Heart right ventricle (tissue), 16 donors: ENCODE measurements at regions of chr18 and their contacts with region 1.

Region 1: DNA sequence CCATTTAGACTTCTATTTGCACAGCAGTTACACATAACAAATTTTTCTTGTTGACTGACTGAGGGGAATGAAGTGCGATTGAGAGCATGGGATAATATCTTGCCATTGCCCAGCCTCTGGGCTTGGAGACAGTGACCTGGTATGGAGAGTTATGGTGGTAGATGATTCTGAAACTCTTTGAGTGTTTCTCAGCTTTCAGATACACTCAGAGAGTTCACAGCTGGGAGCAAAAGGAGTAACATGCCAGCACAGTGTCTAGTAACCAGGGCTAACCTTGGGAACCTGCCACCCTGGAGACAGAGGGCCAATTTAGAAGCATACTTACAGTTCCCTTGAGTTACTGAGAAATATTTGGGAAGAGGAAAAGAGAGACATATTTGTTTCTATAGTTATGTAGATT is 1099.3 kb upstream of the CELF4 start:
- DNase-seq: no peak
- ATAC-seq: no peak
- H3K4me3 ChIP-seq: no peak overlapping the region
- H3K27ac ChIP-seq: no peak overlapping the region
- H3K4me1 ChIP-seq: peaks cover 0 to 14% (median 0%) of the 10 kb centered on the region in 9 donors
- H3K27me3 ChIP-seq: no peaks in the 10 kb centered on the region
- CTCF ChIP-seq: no peak

Region 2: DNA sequence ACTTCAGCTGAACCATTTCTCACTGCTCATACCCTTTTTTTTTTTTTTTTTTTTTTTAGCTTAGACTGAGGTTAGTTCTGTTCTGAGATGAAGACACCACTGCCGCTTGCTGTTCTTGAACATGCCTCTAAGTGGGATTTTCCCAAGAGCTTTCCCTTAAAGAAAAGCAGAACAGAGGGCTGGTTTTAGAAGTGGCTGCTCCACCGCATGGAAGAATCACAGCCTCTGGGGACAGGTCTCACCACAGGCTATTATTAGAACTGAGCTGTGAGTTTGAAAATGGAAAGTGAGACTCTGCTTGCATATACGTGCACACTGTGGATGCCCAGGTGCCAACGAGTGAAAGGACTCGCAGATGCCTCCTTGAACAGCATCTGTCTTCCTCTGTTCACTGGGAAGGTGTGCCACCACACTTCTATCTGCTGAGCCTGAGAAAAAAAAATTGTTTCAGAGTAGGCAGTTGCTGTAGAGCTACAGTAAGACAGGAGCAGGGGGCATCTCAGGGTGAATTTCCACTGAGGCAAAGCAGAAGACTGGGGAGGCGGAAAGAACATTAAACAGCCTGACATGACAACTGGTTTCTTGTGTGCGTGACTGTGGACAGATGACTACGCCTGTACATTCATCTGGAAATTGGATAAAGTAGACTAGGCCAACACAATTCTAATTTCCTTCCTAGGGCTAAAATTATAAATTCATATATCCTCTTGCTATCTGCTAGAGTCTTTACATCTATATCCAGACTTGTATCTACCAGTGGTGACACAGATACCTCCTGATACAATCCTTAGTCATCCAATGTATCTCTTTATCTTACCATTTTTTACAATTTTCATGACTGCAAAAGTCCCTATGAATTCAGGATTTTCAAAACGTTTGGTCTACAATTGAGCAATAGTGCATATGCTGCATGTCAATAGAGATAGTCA is 53.6 kb before region 1 on chr18:
- intact Hi-C with region 1: loop called in 2 of 10 experiments (anchors 5 to 10 kb)
- DNase-seq: peak in 1 of 2 donors; percentile 6
- ATAC-seq: peak in 7 of 8 donors; percentile 33 to 93 (median 81)
- H3K4me3 ChIP-seq: no peak overlapping the region
- H3K27ac ChIP-seq: peak overlapping the region in 3 of 10 donors; percentile 7 to 41 (median 22)
- H3K4me1 ChIP-seq: peaks cover 0 to 6% (median 0%) of the 10 kb centered on the region in 9 donors
- H3K27me3 ChIP-seq: no peaks in the 10 kb centered on the region
- CTCF ChIP-seq: no peak